Activated CD8-positive, alpha-beta T cell treated with anti-CD3 and anti-CD28 coated beads for 36 hours (primary cell): ENCODE measurements at regions of chr19 and their contacts with region 1.

Region 1: GRCh38 chr19:36687214-36688056 is at the start of gene ZNF567:
- DNase-seq: peak; percentile 99
- ATAC-seq: peak; percentile 94
- H3K4me3 Mint-ChIP-seq: peak within 1 kb of the TSS; percentile 87
- H3K27ac Mint-ChIP-seq: peak within 1 kb of the TSS; percentile 89
- H3K4me1 Mint-ChIP-seq: peaks cover 25% of the 10 kb centered on the region
- H3K27me3 Mint-ChIP-seq: no peaks in the 10 kb centered on the region
- CTCF ChIP-seq: no peak
- total RNA-seq, gene ZNF567: 6.4 to 7.6 TPM

Region 2: DNA sequence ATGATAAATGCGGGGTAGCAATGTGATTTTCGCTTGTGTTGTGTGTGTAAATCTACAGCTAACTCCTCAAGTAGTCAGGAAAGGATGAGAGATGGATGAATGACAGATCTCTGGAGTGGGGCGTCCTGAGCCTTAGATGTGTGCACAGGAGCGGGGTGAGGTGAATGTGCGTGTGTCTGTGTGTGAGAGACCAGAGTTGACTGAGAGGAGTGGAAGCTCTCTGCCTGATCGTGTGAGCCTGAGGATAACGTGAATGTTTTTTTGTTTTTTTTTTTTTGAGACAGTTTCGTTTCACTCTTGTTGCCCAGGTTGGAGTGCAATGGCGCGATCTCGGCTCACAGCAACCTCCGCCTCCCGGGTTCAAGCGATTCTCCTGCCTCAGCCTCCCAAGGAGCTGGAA is 21.6 kb before region 1 on chr19:
- CTCF ChIA-PET with region 1: no interaction called
- POLR2A ChIA-PET with region 1: interaction called, 12 read pairs
- intact Hi-C with region 1: no loop called
- DNase-seq: no peak
- ATAC-seq: no peak
- H3K4me3 Mint-ChIP-seq: peak overlapping the region; percentile 100
- H3K27ac Mint-ChIP-seq: peak overlapping the region; percentile 97
- H3K4me1 Mint-ChIP-seq: peaks cover 28% of the 10 kb centered on the region
- H3K27me3 Mint-ChIP-seq: no peaks in the 10 kb centered on the region
- CTCF ChIP-seq: no peak